HCT116 (cell line): ENCODE measurements at regions of chr20 and their contacts with region 1.

Region 1: DNA sequence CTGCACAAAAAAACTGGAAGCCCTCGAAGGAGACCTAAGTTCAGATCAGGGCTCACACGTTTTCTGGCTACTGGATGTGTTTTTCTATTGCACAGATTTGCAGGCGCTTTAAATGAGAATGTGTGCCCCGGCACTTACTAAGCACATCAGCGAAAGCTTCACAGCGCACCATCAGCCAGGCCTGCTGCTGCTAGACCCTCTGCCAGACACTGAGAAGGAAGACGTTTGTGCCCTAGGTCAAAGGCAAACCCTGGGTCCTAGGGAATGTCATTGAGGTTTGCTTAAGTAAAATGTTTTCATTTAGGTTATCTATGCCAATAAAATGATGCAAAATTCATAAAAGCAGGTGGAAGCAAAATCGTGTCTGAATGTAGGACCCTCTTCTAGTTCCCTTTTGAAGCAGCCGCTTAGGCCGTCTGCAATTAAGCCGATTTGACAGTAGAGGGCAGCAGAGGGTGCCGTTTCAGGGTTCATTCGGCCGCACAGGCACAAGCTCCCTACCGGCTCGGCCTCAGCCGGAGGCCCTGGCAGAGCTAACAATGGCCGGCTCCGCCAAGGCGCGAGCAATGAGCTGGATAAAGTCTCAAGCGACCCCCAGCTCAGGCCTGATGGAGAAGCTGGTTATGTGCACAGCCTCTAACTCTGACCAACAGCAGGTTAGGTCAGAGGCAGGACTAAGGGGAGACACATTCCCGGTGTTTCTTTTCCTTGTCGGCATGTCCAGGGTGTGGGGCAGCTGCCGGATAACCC is 107.2 kb upstream of the FOXA2 start:
- DNase-seq: peak; percentile 51
- ATAC-seq: peak; percentile 96
- H3K4me3 ChIP-seq: peak overlapping the region in 1 of 2 experiments; percentile 29; a peak in 1 of 4 replicates
- H3K27ac ChIP-seq: no peak overlapping the region
- H3K4me1 ChIP-seq: peaks cover 2 to 7% of the 10 kb centered on the region in 2 experiments; a peak in 3 of 4 replicates
- H3K27me3 ChIP-seq: no peaks in the 10 kb centered on the region
- CTCF ChIP-seq: peak; percentile 74 to 82 (median 77)
- POLR2A ChIP-seq: no peak
- RAD21 ChIP-seq: peak; percentile 88

Region 2: GRCh38 chr20:22475662-22476061 is 215.9 kb before region 1 on chr20:
- CTCF ChIA-PET with region 1: no interaction called
- POLR2A ChIA-PET with region 1: no interaction called
- RAD21 ChIA-PET with region 1: no interaction called
- intact Hi-C with region 1: no loop called
- DNase-seq: no peak
- ATAC-seq: no peak
- H3K4me3 ChIP-seq: no peak overlapping the region
- H3K27ac ChIP-seq: no peak overlapping the region
- H3K4me1 ChIP-seq: no peaks in the 10 kb centered on the region
- H3K27me3 ChIP-seq: 0 out of 2 replicates have a peak, but pooled peaks cover 3% of the 10 kb centered on the region
- CTCF ChIP-seq: no peak
- POLR2A ChIP-seq: no peak
- RAD21 ChIP-seq: no peak

Region 3: GRCh38 chr20:22805219-22805618 is 113.7 kb after region 1 on chr20:
- CTCF ChIA-PET with region 1: no interaction called
- POLR2A ChIA-PET with region 1: no interaction called
- RAD21 ChIA-PET with region 1: no interaction called
- intact Hi-C with region 1: no loop called
- DNase-seq: no peak
- ATAC-seq: no peak
- H3K4me3 ChIP-seq: no peak overlapping the region
- H3K27ac ChIP-seq: no peak overlapping the region
- H3K4me1 ChIP-seq: no peaks in the 10 kb centered on the region
- H3K27me3 ChIP-seq: peaks cover 8% of the 10 kb centered on the region; the same call in 1 of the 2 replicates
- CTCF ChIP-seq: no peak
- POLR2A ChIP-seq: no peak
- RAD21 ChIP-seq: no peak

Region 4: DNA sequence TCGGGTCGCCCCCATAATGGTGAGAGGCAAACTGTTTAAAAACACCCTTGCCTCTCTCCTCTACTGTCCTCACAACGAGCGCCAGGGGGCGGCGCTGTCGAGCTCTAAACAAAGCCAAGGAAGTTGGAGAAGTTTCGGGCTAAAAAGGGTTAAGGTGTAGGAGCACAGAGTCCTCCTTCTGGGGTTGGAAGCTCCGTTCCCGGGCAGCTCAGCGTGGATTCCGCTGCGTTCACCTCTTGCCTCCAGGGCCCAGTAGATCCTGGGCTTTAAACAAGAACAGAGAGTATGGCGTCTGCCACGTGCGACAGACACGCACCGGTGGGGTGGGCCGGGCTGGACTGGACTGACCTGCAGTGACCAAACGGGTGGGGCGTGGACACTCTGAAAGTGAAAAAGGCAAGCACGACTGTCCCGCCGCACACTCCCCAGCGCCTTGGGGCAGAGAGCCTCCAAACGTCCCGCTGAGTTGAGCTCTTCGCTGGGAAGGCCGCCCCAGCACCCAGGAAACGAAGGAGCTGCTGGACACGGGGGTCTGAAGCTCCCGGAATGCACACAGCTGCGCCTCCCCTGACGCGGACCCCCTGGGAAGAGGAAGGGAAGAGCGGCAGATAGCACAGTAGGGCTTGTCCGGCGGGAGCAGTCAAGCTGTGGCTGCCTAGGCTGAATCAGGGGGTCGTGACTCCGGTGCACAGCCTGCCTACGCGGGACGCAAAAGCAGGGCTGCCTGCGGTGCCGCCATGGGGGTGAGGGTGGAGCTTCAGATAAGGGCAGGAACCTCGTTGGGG is 359.5 kb after region 1 on chr20:
- CTCF ChIA-PET with region 1: interaction called, 22 read pairs
- POLR2A ChIA-PET with region 1: no interaction called
- RAD21 ChIA-PET with region 1: interaction called in 1 of 2 experiments, 3 read pairs
- intact Hi-C with region 1: no loop called
- DNase-seq: peak; percentile 42
- ATAC-seq: peak; percentile 69
- H3K4me3 ChIP-seq: peak overlapping the region; percentile 51 to 67
- H3K27ac ChIP-seq: no peak overlapping the region
- H3K4me1 ChIP-seq: peaks cover 3 to 31% of the 10 kb centered on the region in 2 experiments; a peak in 3 of 4 replicates
- H3K27me3 ChIP-seq: peaks cover 12% of the 10 kb centered on the region; the same call in 1 of the 2 replicates
- CTCF ChIP-seq: peak; percentile 54 to 73 (median 70); a peak in 5 of 6 replicates
- POLR2A ChIP-seq: no peak
- RAD21 ChIP-seq: peak; percentile 73

Region 5: GRCh38 chr20:23079016-23079351 is 387.4 kb after region 1 on chr20:
- CTCF ChIA-PET with region 1: no interaction called
- POLR2A ChIA-PET with region 1: no interaction called
- RAD21 ChIA-PET with region 1: no interaction called
- intact Hi-C with region 1: loop called (anchors 1 kb)
- DNase-seq: no peak
- ATAC-seq: peak; percentile 80
- H3K4me3 ChIP-seq: no peak overlapping the region
- H3K27ac ChIP-seq: no peak overlapping the region
- H3K4me1 ChIP-seq: no peaks in the 10 kb centered on the region
- H3K27me3 ChIP-seq: peaks cover 13% of the 10 kb centered on the region
- CTCF ChIP-seq: peak; percentile 31 to 82 (median 77); a peak in 5 of 6 replicates
- POLR2A ChIP-seq: no peak
- RAD21 ChIP-seq: peak; percentile 43

Region 6: GRCh38 chr20:23235173-23236027 is 543.9 kb after region 1 on chr20:
- CTCF ChIA-PET with region 1: interaction called, 14 read pairs
- POLR2A ChIA-PET with region 1: no interaction called
- RAD21 ChIA-PET with region 1: interaction called, 4 to 5 read pairs
- intact Hi-C with region 1: loop called (anchors 1 kb)
- DNase-seq: peak; percentile 52
- ATAC-seq: peak; percentile 98
- H3K4me3 ChIP-seq: no peak overlapping the region
- H3K27ac ChIP-seq: no peak overlapping the region
- H3K4me1 ChIP-seq: peaks cover 0 to 12% of the 10 kb centered on the region in 2 experiments; a peak in 2 of 4 replicates
- H3K27me3 ChIP-seq: peaks cover 8% of the 10 kb centered on the region
- CTCF ChIP-seq: peak; percentile 69 to 93 (median 86)
- POLR2A ChIP-seq: no peak
- RAD21 ChIP-seq: peak; percentile 74

Region 7: DNA sequence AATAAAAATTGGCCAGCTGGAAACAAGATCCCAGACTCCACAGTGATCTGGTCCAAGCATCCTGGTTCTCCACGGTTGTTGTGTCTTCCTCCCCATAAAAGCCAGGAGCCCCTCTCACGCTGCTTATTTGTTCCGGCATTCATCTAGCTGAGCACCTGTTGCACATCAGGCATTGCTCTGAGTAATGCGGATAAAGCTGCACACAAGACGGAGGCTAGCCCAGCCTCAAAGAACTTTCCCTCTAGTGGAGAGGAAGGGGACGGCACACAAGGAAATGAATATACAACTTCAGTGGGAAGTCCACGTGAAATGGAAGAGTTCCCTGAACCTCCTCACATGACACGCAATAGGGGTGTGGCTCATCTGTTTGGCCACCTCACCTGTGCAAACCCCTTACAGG is 628.8 kb after region 1 on chr20:
- CTCF ChIA-PET with region 1: interaction called, 12 read pairs
- POLR2A ChIA-PET with region 1: no interaction called
- RAD21 ChIA-PET with region 1: interaction called in 1 of 2 experiments, 3 read pairs
- intact Hi-C with region 1: loop called (anchors 1 kb)
- DNase-seq: peak; percentile 26
- ATAC-seq: peak; percentile 94
- H3K4me3 ChIP-seq: no peak overlapping the region
- H3K27ac ChIP-seq: no peak overlapping the region
- H3K4me1 ChIP-seq: no peaks in the 10 kb centered on the region; a peak in 1 of 4 replicates
- H3K27me3 ChIP-seq: peaks cover 64% of the 10 kb centered on the region
- CTCF ChIP-seq: peak in 2 of 3 experiments; percentile 65 to 66; a peak in 4 of 6 replicates
- POLR2A ChIP-seq: no peak
- RAD21 ChIP-seq: peak; percentile 36; the same call in 1 of the 2 replicates

Region 8: GRCh38 chr20:23350196-23350903 is 658.8 kb after region 1 on chr20 and contains the start of gene NXT1:
- CTCF ChIA-PET with region 1: interaction called, 11 read pairs
- POLR2A ChIA-PET with region 1: interaction called, 4 read pairs
- RAD21 ChIA-PET with region 1: no interaction called
- intact Hi-C with region 1: no loop called
- DNase-seq: peak; percentile 98
- ATAC-seq: peak; percentile 88
- H3K4me3 ChIP-seq: peak within 1 kb of the TSS; percentile 92 to 99
- H3K27ac ChIP-seq: peak within 1 kb of the TSS; percentile 99
- H3K4me1 ChIP-seq: peaks cover 15 to 24% of the 10 kb centered on the region in 2 experiments
- H3K27me3 ChIP-seq: no peaks in the 10 kb centered on the region
- CTCF ChIP-seq: no peak
- POLR2A ChIP-seq: peak; percentile 46
- RAD21 ChIP-seq: no peak
- total RNA-seq, gene NXT1: 29.9 TPM